Activated naive CD8-positive, alpha-beta T cell treated with anti-CD3 and anti-CD28 coated beads, Interleukin-2, amount 10 ng/mL, durations not matched to agents 7 days and 5 days (primary cell): ENCODE measurements at regions of chr17 and their contacts with region 1.

Region 1: DNA sequence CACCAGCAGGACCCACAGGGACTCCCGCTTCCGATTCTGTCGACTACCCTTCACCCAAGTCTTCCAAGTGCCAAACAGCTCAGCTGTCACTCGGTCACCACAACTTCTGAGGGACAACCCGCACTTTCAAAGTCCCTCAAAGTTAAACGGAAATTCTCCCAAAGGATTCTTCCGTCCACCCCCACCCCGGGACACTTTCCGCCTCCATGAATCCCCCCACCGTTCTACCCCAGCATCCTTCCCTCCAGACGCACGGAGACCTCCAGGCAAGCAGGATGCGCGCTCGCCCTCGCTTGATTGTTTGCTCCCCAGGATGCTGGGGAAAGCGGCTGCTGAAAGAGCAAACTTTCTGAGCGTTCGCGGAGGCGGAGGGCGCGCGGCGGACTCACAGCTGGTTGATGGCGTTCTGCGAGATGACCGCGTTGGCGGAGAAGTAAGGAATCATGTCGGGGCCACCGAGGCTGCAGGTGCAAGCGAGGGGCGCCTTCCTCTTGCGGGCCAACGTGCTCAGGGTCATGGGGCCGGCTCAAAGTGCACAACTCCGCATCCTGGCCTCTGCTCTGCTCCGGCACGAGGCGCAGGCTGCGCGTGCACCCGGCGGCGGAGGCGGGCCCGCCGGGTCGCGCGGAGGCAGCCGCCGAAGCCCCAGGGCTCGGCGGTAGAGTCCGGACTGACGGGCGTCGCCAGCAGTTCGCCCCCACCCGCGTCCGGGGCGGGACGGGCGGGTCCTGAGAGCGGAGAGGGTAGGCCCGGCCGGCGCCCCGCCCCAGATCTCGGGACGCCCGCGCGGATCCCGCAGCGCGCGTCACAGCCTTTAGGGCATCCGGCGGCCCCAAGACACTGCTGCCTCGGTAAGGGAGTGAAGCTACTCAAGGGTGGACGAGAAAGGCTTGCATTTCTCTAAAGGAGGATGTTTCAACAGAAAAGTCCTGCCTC is 138.3 kb upstream of the CORO6 start:
- DNase-seq: peak; percentile 98
- ATAC-seq: peak; percentile 87
- H3K4me3 Mint-ChIP-seq: peak overlapping the region; percentile 96
- H3K27ac Mint-ChIP-seq: peak overlapping the region; percentile 93
- H3K4me1 Mint-ChIP-seq: peaks cover 21% of the 10 kb centered on the region
- H3K27me3 Mint-ChIP-seq: no peaks in the 10 kb centered on the region

Region 2: DNA sequence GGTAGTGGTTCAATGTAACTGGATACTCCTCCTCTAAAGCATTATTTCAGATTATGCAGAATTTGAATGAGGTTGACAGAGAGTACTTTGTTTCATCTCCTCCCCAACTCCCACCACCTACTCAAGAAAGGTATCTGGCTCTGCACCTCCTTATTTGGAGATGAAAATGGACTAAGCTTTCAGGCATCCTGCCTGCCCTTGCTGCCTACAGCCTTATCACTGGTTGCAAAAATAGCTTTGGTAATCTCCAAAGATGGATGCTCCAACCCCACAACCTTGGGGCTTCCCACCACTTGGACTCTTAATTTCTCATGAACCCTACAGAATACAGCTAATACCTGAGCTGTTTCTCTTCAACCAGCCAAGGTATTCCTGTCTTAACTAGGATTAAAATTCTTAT is 93.1 kb before region 1 on chr17:
- POLR2A ChIA-PET with region 1: interaction called, 11 read pairs
- DNase-seq: no peak
- ATAC-seq: no peak
- H3K4me3 Mint-ChIP-seq: no peak overlapping the region
- H3K27ac Mint-ChIP-seq: peak overlapping the region; percentile 36
- H3K4me1 Mint-ChIP-seq: peaks cover 21% of the 10 kb centered on the region
- H3K27me3 Mint-ChIP-seq: no peaks in the 10 kb centered on the region

Region 3: GRCh38 chr17:29705386-29705785 is 55.6 kb before region 1 on chr17:
- POLR2A ChIA-PET with region 1: interaction called, 28 read pairs
- DNase-seq: no peak
- ATAC-seq: no peak
- H3K4me3 Mint-ChIP-seq: peak overlapping the region; percentile 73
- H3K27ac Mint-ChIP-seq: peak overlapping the region; percentile 90
- H3K4me1 Mint-ChIP-seq: peaks cover 25% of the 10 kb centered on the region
- H3K27me3 Mint-ChIP-seq: no peaks in the 10 kb centered on the region

Region 4: DNA sequence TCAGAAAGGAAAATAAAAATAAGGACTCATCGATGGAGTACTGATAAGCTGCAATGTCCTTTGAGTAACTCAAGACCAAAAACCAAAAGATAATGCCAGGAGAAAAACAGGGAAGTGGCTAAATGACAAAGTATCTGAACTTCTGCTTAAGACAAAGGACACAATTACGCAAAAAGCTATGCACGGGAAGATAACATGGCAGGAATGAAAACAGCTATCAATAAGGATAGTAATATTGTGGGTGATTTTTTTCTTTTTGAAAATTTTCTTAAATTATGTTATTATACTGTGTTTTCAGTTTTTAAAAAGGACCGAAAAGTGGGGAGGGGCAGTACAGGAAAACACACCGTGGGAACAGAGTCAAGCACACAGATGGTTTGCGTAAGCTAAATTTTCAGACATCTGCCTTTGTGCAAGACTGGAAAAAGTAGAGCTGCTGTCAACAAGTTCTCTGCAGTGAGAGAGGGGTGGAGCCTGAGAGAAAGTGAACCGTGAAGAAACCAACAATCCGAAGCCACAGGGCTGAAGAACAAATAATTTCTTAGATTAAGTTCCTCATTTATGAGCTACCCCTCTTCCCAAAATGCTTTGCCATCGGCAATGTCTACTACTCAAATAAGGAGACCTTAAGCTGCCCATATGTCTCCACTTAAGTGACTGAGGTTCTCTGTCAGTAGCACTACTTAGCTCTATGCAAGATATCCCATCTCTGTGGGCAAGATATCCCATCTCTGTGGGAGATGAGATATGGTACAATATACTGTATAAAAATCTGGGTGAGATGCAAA is 38.4 kb before region 1 on chr17:
- POLR2A ChIA-PET with region 1: interaction called, 11 read pairs
- DNase-seq: no peak
- ATAC-seq: peak; percentile 54
- H3K4me3 Mint-ChIP-seq: peak overlapping the region; percentile 36
- H3K27ac Mint-ChIP-seq: peak overlapping the region; percentile 65
- H3K4me1 Mint-ChIP-seq: peaks cover 52% of the 10 kb centered on the region
- H3K27me3 Mint-ChIP-seq: no peaks in the 10 kb centered on the region

Region 5: DNA sequence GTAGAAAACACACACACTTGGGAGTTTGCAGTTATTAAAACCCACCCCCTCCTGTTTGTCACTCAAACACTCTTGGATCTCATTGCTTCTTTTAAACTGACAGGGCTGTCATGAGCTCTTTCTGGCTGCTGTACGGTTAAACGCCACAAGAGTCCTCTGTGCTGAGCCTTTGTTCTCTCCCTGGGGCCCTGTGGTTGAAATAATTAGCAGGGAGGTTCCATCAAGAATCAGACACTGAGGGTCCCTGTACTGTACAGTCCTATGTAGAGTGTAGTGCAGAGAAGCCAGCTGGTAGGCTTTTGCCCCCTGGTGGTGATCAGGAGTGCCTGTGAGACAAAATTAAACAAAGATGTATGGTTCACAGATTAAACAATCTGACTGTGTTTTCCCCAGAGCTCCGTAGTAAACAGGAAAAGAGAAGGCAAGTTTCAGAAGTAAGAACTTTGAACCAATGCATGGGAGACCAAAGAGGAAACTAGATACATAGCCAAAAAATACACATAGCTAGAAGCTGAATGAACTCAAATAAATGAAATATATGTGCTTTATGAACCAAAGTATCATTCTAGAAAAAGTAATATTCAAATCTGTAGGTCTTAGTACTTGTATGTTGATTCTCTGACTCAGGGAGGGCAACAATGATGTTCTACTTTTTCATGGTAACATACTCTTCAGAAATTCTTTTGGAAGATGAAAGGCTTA is 170.4 kb after region 1 on chr17:
- POLR2A ChIA-PET with region 1: interaction called, 15 read pairs
- DNase-seq: peak; percentile 53
- ATAC-seq: peak; percentile 74
- H3K4me3 Mint-ChIP-seq: no peak overlapping the region
- H3K27ac Mint-ChIP-seq: no peak overlapping the region
- H3K4me1 Mint-ChIP-seq: peaks cover 12% of the 10 kb centered on the region
- H3K27me3 Mint-ChIP-seq: peaks cover 3% of the 10 kb centered on the region